Dorsolateral prefrontal cortex (tissue), 120 donors: ENCODE measurements at regions of chr14 and their contacts with region 1.

Region 1: DNA sequence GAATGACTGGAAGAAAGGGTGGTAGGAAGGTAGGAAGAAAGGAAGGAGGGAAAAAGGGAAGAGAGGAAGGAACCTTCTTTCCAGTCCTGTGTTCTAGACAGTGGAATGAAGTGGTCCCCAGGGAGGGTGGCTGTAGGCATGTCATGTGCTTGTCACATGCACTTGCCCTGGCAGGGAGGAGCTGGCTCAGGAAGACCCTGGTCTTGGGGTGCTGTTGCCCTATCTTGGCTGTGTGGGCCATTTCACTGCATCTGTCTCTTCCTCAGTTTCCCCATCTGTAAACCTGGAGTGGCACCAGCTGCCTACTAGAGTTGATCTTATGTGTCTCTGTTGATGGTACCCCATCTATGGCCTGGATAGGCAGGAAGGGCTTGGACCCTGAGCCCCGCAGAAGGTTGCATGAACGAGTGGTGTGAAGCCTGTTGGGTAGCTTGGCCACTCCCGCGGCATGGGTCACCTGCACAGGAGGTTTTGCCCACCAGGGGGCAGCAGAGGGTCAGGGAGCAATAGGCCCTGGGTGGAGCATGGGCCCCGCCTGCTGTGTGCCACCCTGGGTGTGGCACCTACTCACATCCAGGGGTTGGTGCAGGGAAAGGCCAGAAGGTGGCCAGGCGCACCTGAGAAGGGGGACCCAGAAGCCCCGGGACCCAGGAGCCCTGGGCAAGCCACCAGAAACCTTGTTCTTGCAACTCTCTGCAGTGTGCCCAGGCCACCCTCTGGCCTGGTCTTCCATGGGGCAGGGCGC is 25.1 kb downstream of the MEG3 start:
- DNase-seq: peak in 3 of 10 donors; percentile 27 to 55 (median 43)
- H3K4me3 ChIP-seq: peak overlapping the region in 2 of 59 donors; percentile 10 to 16
- H3K27ac ChIP-seq: no peak overlapping the region
- H3K27me3 ChIP-seq: peaks cover 0 to 3% (median 0%) of the 10 kb centered on the region in 45 donors
- CTCF ChIP-seq: peak in 55 of 56 donors; percentile 31 to 69 (median 58)

Region 2: GRCh38 chr14:100761481-100761880 is 89.5 kb before region 1 on chr14:
- intact Hi-C with region 1: no loop called
- DNase-seq: no peak
- H3K4me3 ChIP-seq: no peak overlapping the region
- H3K27ac ChIP-seq: no peak overlapping the region
- H3K27me3 ChIP-seq: peaks cover 0 to 19% (median 0%) of the 10 kb centered on the region in 45 donors
- CTCF ChIP-seq: no peak

Region 3: GRCh38 chr14:101235335-101236103 is 384.5 kb after region 1 on chr14:
- intact Hi-C with region 1: loop called in 1 of 2 experiments (anchors 5 kb)
- DNase-seq: peak in 9 of 10 donors; percentile 36 to 75 (median 56)
- H3K4me3 ChIP-seq: no peak overlapping the region
- H3K27ac ChIP-seq: no peak overlapping the region
- H3K27me3 ChIP-seq: peaks cover 0 to 4% (median 0%) of the 10 kb centered on the region in 45 donors
- CTCF ChIP-seq: peak; percentile 30 to 82 (median 68)

Region 4: GRCh38 chr14:101635749-101636560 is 784.9 kb after region 1 on chr14:
- intact Hi-C with region 1: loop called in 1 of 2 experiments (anchors 10 kb)
- DNase-seq: peak in 1 of 10 donors; percentile 44
- H3K4me3 ChIP-seq: no peak overlapping the region
- H3K27ac ChIP-seq: peak overlapping the region in 29 of 59 donors; percentile 15 to 80 (median 51)
- H3K27me3 ChIP-seq: no peaks in the 10 kb centered on the region
- CTCF ChIP-seq: no peak